Activated naive CD4-positive, alpha-beta T cell treated with anti-CD3 and anti-CD28 coated beads for 36 hours (primary cell): ENCODE measurements at regions of chr17 and their contacts with region 1.

Region 1: GRCh38 chr17:16537130-16537458 is 31.9 kb downstream of the ZNF287 start:
- DNase-seq: no peak
- H3K4me3 Mint-ChIP-seq: no peak overlapping the region
- H3K27ac Mint-ChIP-seq: no peak overlapping the region
- H3K4me1 Mint-ChIP-seq: peaks cover 15% of the 10 kb centered on the region
- H3K27me3 Mint-ChIP-seq: no peaks in the 10 kb centered on the region

Region 2: GRCh38 chr17:16027708-16028584 is 509.1 kb before region 1 on chr17:
- CTCF ChIA-PET with region 1: no interaction called
- intact Hi-C with region 1: loop called (anchors 5 kb)
- DNase-seq: peak; percentile 82
- H3K4me3 Mint-ChIP-seq: peak overlapping the region; percentile 52
- H3K27ac Mint-ChIP-seq: peak overlapping the region; percentile 97
- H3K4me1 Mint-ChIP-seq: peaks cover 40% of the 10 kb centered on the region
- H3K27me3 Mint-ChIP-seq: no peaks in the 10 kb centered on the region

Region 3: DNA sequence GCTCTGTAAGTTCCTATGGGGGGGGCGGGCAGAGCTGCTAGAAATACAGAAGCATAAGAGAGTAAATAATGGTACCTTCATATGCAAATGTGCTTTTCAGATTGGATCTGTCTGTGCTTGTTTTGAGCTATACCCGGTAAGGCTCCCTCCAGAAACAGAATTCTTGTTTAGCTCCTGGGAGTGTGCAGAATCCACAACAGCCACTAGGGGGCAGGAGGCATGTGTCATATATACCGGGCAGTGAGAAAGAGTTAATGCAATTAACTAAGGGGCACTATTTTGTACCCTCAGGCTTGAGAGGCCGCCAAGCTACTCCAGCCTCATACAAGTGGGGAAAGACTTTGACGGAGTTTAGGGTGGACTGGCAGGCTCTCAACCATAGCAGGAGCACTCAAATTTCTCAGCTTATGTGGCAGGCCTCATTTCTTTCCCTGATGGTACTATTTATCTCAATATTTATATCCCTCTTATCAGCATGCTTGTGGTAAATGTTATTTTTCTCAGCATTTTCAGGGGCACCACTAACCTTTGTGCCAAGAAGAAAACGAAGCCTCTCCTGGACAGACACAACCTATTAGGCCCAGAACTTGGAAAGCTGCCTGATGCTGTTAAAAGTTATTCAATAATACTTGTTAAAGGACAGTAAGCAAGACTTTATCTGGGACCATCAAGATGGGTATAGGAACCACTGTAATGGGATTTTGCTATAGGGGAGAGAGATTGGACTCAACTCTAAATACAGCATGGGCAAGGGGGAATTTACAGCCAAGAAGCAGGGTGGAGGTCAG is 173.2 kb before region 1 on chr17:
- CTCF ChIA-PET with region 1: interaction called, 5 read pairs
- intact Hi-C with region 1: loop called (anchors 5 kb)
- DNase-seq: peak; percentile 91
- H3K4me3 Mint-ChIP-seq: no peak overlapping the region
- H3K27ac Mint-ChIP-seq: no peak overlapping the region
- H3K4me1 Mint-ChIP-seq: no peaks in the 10 kb centered on the region
- H3K27me3 Mint-ChIP-seq: no peaks in the 10 kb centered on the region

Region 4: DNA sequence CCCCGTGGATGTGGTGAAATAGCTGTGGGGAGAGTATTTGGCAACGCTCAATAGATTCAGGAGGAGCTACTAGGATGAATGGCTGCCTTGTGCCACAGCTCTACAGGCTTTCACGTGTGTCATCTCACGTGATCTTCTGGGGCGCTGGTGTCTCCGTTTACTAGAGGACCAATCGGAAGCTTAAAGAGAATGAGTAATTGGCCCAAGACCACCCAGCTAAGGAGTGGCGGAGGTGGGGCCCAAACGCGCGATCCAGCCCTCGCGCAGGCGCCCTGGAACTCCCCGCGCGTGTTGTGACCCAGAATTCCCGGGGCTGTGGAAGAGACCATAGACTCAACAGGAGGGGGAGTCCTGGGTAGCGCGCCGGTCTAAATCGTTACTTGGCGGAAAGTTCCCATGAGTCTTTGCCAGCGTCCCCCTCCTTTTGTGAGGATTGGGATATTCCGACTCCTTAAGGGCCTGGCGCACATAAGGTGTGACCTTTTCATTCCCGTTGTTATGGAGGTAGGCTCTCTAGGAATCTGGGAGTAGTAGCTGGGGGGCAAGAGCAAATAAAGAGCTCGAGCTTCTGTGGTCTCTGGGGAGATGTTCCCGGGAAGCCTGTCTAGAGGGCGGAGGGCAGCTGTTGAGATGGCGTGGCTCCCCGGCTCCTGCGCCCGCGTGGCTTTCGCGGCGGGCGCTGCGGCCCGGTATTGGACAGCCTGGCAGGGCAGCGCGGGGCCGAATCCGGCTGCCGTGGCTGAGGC is 98.4 kb before region 1 on chr17:
- CTCF ChIA-PET with region 1: interaction called, 3 read pairs
- intact Hi-C with region 1: loop called (anchors 1 kb)
- DNase-seq: peak; percentile 98
- H3K4me3 Mint-ChIP-seq: peak overlapping the region; percentile 99
- H3K27ac Mint-ChIP-seq: peak overlapping the region; percentile 99
- H3K4me1 Mint-ChIP-seq: peaks cover 39% of the 10 kb centered on the region
- H3K27me3 Mint-ChIP-seq: no peaks in the 10 kb centered on the region

Region 5: GRCh38 chr17:16521070-16521727 is 15.9 kb before region 1 on chr17:
- CTCF ChIA-PET with region 1: interaction called, 15 read pairs
- intact Hi-C with region 1: no loop called
- DNase-seq: peak; percentile 82
- H3K4me3 Mint-ChIP-seq: no peak overlapping the region
- H3K27ac Mint-ChIP-seq: no peak overlapping the region
- H3K4me1 Mint-ChIP-seq: no peaks in the 10 kb centered on the region
- H3K27me3 Mint-ChIP-seq: peaks cover 26% of the 10 kb centered on the region

Region 6: DNA sequence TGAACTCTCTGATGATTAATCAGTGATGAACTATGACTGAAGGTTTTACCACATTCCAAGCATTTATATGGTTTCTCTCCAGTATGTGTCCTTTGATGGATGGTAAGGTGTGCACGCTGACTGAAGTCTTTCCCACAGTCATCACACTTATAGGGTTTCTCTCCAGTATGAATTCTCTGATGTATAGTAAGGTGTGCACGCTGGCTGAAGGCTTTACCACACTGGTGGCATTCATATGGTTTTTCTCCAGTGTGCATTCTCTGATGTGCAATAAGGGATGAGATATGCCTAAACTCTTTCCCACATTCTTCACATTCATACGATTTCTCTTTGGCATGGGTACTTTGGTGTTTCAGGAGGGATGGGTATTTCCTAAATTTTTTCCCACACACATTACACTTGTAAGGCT is 15.5 kb after region 1 on chr17:
- CTCF ChIA-PET with region 1: no interaction called
- intact Hi-C with region 1: no loop called
- DNase-seq: no peak
- H3K4me3 Mint-ChIP-seq: no peak overlapping the region
- H3K27ac Mint-ChIP-seq: no peak overlapping the region
- H3K4me1 Mint-ChIP-seq: peaks cover 4% of the 10 kb centered on the region
- H3K27me3 Mint-ChIP-seq: no peaks in the 10 kb centered on the region

Region 7: DNA sequence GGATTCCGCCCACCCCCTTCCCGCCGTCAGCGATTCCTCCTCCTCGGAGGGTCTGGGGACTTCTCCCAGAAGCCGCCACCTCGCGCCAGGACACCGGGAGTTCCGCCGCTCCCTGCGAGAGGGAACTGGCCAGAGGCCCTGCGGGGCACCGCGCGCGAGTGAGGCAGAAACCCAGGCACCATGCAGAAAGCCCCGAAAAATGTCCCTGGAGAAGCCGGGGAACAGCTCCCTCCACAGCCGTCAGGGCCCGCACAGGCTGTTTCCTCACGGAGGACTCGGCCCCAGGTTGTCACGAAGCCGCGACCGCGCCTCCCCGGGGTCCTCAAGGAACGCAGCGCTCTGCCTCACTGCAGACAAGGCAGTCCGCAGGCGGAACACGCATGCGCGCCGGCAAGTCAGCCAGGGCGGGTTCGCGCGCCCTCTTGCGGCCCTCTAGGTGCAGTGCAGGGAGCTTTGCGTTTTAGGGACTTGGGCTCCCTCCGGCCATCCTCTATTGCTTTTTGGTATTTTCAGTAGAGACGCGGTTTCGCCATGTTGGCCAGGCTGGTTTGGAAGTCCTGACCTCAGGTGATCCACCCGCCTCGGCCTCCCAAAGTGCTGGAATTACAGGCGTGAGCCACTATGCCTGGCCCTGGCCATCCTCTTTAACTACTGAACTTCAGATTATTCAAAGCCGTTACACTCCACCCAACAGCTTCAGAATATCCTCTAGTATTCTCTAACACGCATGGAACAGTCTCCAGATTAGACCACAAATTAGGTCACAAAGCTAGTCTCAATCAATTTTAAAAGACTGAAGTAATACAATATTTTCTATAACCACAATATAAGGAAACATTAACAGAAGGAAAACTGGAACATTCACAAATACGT is 52.2 kb after region 1 on chr17:
- CTCF ChIA-PET with region 1: interaction called, 31 read pairs
- intact Hi-C with region 1: loop called (anchors 1 kb)
- DNase-seq: peak; percentile 94
- H3K4me3 Mint-ChIP-seq: peak overlapping the region; percentile 69
- H3K27ac Mint-ChIP-seq: no peak overlapping the region
- H3K4me1 Mint-ChIP-seq: peaks cover 3% of the 10 kb centered on the region
- H3K27me3 Mint-ChIP-seq: peaks cover 22% of the 10 kb centered on the region

Region 8: GRCh38 chr17:16873174-16874035 is 336.3 kb after region 1 on chr17:
- CTCF ChIA-PET with region 1: no interaction called
- intact Hi-C with region 1: loop called (anchors 5 kb)
- DNase-seq: peak; percentile 61
- H3K4me3 Mint-ChIP-seq: no peak overlapping the region
- H3K27ac Mint-ChIP-seq: no peak overlapping the region
- H3K4me1 Mint-ChIP-seq: no peaks in the 10 kb centered on the region
- H3K27me3 Mint-ChIP-seq: no peaks in the 10 kb centered on the region